ENCODE measurements at regions of chr1 and their contacts with region 1.

Region 1: GRCh38 chr1:6235296-6235677 is 477 bp downstream of the ICMT start:
- H3K4me3 ChIP-seq: peak overlapping the region; percentile 92
- H3K27ac ChIP-seq: peak overlapping the region; percentile 89; the same call in 1 of the 2 replicates
- H3K4me1 ChIP-seq: no peaks in the 10 kb centered on the region
- CTCF ChIP-seq: no peak

Region 2: DNA sequence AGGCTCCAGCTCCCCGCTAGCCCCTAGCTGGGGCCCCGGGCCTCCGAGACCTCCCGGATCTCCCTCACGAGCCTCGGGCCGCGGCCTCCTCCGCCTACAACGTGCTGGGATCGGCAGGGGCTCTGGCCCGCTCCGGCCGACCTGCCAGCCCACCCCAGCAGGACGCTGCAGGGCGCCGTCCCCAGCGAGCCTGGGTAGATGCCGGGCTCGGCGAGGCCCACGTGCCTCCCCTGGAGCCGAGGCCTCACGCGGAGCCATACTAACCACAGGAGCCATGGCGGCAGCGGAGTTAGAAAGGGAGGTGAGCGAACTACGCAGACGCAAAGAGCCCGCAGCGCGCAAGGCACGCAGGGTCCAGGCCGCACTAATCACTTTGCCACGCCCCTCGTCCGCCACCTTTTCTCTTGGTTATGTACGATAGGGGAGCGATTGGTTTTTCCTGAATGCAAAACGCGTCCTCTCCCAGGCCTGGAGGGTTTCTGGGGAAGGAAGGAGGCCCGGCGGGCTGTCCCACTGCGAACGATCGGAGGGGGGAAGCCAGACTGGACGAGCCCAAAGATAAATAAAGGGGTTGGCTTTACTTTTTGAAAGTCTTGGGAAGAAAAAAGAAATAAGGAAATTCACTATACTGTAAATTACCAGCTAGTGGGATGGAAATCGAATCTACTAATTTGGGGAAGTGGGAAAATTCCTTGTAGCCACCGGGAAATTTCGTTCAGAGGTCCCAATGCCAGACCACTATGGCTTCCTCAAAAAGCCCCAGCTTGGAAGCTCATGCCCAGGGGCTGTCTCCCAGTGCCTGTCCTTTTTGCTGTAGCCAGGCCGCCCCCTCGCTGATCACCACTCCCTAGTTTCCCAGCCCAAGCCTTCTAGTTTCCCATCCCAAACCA is 35.7 kb before region 1 on chr1 and contains the start of gene RPL22:
- CTCF ChIA-PET with region 1: interaction called, 9 read pairs
- POLR2A ChIA-PET with region 1: interaction called, 10 read pairs
- H3K4me3 ChIP-seq: peak within 1 kb of the TSS; percentile 99
- H3K27ac ChIP-seq: peak within 1 kb of the TSS; percentile 76
- H3K4me1 ChIP-seq: peaks cover 4% of the 10 kb centered on the region; the same call in 1 of the 2 replicates
- CTCF ChIP-seq: no peak

Region 3: DNA sequence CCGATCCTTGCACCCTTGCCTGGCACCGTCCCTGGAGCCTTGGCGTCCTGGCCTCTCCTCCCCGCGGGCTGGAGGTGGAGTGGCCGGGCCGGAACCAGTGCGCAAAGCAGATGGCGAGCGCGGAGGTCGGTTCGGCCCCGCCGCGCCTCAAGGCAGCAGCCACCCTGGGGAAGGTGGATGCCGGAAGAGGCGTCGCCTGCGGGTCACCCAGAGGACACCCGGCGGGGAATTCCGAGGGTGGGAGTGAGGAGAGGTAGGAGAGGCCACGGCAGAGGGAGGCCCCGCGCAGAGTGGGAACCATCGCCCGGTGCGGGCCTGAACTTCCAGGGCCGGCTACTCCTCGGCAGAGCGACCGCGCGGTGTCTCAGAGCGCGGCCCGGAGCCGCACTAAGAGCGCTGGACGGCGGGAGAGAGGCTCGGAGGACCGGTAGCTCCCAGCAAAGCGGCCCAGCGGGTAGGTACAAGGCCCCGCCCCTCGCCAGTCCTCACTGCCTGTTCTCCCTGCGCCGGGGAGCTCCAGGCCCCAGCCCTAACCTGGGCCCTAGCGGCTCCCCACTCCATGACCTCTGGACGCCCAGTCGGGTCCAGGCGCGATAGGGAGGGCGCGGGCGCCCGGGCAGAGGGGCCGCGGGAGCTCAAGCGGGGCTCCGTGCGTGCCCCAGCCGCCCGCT is 29.3 kb before region 1 on chr1 and contains the start of gene RNF207:
- CTCF ChIA-PET with region 1: interaction called, 9 read pairs
- POLR2A ChIA-PET with region 1: interaction called, 14 read pairs
- H3K4me3 ChIP-seq: peak within 1 kb of the TSS; percentile 63
- H3K27ac ChIP-seq: peak within 1 kb of the TSS; percentile 52; the same call in 1 of the 2 replicates
- H3K4me1 ChIP-seq: no peaks in the 10 kb centered on the region
- CTCF ChIP-seq: no peak

Region 4: GRCh38 chr1:6343506-6344405 is 108.5 kb after region 1 on chr1:
- CTCF ChIA-PET with region 1: interaction called, 14 read pairs
- POLR2A ChIA-PET with region 1: no interaction called
- H3K4me3 ChIP-seq: no peak overlapping the region
- H3K27ac ChIP-seq: no peak overlapping the region
- H3K4me1 ChIP-seq: no peaks in the 10 kb centered on the region
- CTCF ChIP-seq: peak; percentile 93

Region 5: DNA sequence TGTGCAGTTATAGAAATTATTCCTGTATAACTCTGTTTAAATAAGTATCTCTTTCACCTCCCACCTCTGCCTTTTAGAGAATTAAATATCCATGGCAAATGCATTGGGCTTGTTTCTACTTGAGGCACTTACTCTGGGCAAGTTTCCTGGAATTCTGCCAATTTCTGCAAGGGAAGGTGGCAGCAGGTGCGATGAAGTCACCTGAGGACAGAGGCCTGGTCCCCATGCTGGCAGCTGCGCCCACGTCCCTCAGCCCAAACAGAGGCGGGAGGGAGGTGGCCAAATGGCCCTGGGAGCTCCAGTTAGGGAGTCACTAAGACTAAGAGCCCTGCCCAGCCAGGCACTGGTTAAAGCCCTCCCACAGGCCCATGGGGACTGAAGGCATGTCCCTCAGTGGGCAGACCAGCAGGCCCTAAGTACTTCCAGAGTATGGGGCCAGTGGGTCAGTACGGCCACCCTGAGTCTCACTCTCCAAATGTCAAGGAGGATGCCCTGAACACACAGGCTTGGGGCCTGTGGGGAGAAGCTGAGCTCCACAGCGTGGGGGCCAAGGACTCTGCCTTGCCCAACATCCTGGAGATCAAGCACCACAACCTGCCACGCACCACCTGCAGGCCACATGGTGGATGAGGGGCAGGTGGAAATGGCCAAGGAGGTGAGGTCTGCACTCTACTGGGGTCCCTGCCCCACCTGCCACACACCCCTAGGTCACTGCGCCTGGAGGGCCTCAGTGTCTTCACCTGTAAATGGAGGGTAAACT is 138.9 kb after region 1 on chr1:
- CTCF ChIA-PET with region 1: no interaction called
- POLR2A ChIA-PET with region 1: no interaction called
- H3K4me3 ChIP-seq: no peak overlapping the region
- H3K27ac ChIP-seq: no peak overlapping the region
- H3K4me1 ChIP-seq: no peaks in the 10 kb centered on the region
- CTCF ChIP-seq: no peak

Measured in HEK293 (cell line).